ENCODE measurements at regions of chr11 and their contacts with region 1.

Region 1: DNA sequence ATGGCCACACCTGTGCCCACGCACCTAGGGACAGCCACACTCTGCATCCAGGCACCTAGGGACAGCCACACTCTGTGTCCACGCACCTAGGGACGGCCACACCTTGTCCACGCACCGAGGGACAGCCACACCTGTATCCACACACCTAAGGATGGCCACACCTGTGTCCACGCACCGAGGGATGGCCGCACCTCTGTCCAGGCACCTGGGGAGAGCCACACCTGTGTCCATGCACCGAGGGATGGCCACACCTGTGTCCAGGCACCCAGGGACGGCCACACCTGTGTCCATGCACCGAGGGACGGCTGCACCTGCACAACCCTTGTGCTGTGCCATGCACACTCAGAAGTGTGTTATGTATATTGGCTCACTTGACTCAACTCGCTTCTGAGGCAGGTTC is 10.8 kb downstream of the OVOL1 start:
- DNase-seq: no peak

Region 2: DNA sequence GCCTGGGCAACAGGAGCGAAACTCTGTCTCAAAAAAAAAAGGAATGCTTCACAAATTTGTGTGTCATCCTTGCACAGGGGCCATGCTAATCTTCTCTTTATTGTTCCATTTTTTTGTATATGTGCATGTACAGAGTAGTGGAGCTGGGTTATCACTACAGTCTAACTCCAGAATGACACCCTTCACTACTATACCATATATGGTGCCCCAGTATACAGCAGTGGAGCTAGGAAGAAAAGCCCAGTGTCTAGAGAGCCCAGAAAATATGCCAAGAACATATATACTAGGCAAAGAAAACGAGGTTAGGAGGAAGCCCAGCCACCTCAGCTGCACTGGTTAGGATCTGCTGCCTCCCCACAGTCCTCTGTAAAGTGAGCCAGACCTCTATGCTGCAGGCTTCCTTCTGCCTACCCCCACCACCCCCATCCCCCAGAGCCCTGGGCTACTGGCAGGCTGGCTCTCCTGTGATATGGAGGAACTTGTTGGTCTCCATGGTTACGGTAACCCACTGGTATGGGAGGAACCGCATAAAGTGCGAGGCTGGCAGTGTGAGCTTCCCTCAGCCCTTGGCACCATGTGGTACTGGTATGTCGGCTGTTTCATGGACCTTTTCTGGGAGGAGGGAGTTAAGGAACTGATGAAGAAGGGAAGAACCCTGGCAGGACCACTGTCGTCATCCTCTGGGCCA is 1915.0 kb before region 1 on chr11:
- CTCF ChIA-PET with region 1: interaction called, 10 read pairs
- POLR2A ChIA-PET with region 1: no interaction called
- DNase-seq: no peak

Measured in HEK293T (cell line).